ENCODE measurements at regions of chr18 and their contacts with region 1.

Region 1: GRCh38 chr18:3454365-3455089 is 4.6 kb downstream of the TGIF1 start:
- DNase-seq: peak; percentile 39
- ATAC-seq: no peak
- H3K4me3 Mint-ChIP-seq: peak overlapping the region; percentile 94
- H3K27ac Mint-ChIP-seq: peak overlapping the region; percentile 99
- H3K4me1 Mint-ChIP-seq: peaks cover 61% of the 10 kb centered on the region
- H3K27me3 Mint-ChIP-seq: no peaks in the 10 kb centered on the region
- CTCF ChIP-seq: peak; percentile 83

Region 2: DNA sequence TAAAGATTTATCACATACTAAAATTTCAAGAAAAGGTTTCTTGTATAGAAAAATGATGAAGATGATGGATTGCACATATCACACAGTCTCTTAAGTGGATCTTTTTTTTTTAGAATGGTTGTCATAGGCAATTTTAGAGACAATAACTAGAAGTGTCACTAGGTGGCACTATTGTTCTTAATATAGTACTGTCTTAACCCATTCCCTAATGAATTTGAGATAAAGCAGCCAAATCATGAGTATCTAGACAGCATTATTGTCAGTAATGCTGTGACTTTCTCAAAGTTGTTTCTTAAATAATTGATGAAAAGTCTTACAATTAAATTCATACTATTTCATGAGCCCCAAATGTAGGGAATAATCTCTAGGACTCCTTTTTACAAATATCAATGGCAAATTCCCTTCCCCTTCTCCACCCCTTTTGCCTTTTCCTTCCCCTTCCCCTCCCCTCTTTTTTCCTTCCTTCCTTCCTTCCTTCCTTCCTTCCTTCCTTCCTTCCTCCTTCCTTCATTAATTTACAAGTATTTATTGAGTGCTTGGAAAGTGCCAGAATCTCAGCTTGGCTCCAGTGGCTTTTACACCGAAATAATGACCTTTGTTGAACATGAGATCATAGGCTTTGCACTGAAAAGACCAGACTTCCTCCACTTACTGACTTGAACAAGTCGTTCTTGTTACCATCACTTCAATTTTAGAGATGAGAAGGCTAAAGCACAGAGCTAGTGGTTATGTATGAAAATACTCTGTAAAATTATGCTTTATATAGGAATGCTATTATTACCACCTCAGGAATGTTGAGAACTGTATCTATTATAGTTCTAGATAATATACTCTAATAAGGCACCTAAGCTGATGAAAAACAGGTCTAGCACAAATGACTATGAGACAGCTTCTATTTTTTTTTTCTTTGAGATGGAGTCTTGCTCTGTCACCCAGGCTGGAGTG is 172.8 kb before region 1 on chr18:
- CTCF ChIA-PET with region 1: interaction called, 24 read pairs
- POLR2A ChIA-PET with region 1: no interaction called
- intact Hi-C with region 1: loop called (anchors 5 kb)
- DNase-seq: no peak
- ATAC-seq: peak; percentile 88
- H3K4me3 Mint-ChIP-seq: no peak overlapping the region
- H3K27ac Mint-ChIP-seq: no peak overlapping the region
- H3K4me1 Mint-ChIP-seq: peaks cover 9% of the 10 kb centered on the region
- H3K27me3 Mint-ChIP-seq: no peaks in the 10 kb centered on the region
- CTCF ChIP-seq: peak; percentile 76

Region 3: GRCh38 chr18:3297025-3297984 is 157.2 kb before region 1 on chr18:
- CTCF ChIA-PET with region 1: interaction called, 42 read pairs
- POLR2A ChIA-PET with region 1: interaction called, 4 read pairs
- intact Hi-C with region 1: no loop called
- DNase-seq: peak; percentile 99
- ATAC-seq: peak; percentile 99
- H3K4me3 Mint-ChIP-seq: peak overlapping the region; percentile 92
- H3K27ac Mint-ChIP-seq: peak overlapping the region; percentile 86
- H3K4me1 Mint-ChIP-seq: peaks cover 5% of the 10 kb centered on the region
- H3K27me3 Mint-ChIP-seq: peaks cover 24% of the 10 kb centered on the region
- CTCF ChIP-seq: peak; percentile 83

Region 4: DNA sequence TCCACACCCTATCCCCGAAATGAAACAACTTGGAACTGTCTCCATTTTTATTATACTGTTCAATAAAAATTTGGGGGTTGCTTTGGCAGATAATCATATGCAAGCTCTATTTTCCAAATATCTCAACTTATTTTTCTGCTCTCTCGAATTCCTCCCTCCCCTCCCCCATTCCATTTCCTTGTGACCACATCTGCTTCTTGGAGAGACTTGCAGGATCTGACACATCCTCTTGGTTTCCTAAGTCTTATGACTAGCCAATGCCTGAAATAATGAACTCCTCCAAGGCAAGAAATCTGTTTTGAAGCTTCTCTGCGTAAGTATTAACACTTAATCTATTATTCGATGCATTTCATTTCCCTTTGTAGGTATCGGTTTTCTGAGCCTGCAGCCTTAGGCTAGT is 11.5 kb after region 1 on chr18:
- CTCF ChIA-PET with region 1: interaction called, 26 read pairs
- POLR2A ChIA-PET with region 1: interaction called, 5 read pairs
- intact Hi-C with region 1: no loop called
- DNase-seq: no peak
- ATAC-seq: no peak
- H3K4me3 Mint-ChIP-seq: no peak overlapping the region
- H3K27ac Mint-ChIP-seq: no peak overlapping the region
- H3K4me1 Mint-ChIP-seq: peaks cover 26% of the 10 kb centered on the region
- H3K27me3 Mint-ChIP-seq: no peaks in the 10 kb centered on the region
- CTCF ChIP-seq: no peak

Region 5: DNA sequence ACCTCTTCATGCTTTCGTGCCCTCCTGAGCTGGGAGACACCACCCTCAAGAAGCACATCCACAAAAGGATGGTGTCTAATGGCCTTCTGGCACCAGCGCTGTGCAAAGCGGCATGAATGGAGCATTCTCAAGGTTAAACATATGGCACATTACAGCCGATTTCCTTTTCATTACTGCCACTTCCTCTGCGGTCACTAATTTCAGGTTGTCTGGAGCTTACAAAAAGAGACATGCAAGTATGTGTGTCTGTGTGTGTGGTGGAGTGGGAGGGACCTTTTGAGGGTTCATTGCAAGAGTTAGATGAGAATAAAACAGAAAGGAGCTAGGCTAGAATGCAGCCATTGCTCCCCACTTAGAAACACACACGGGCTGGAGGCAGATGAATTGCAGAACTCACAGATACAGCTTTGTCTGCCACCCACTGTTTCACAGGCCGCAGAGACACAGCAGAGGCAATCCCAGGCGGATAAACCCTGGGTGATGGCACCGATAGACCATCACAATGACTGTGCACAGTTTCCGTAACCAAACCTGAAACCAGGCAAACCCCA is 71.4 kb after region 1 on chr18:
- CTCF ChIA-PET with region 1: interaction called, 14 read pairs
- POLR2A ChIA-PET with region 1: no interaction called
- intact Hi-C with region 1: no loop called
- DNase-seq: peak; percentile 72
- ATAC-seq: peak; percentile 84
- H3K4me3 Mint-ChIP-seq: peak overlapping the region; percentile 43
- H3K27ac Mint-ChIP-seq: peak overlapping the region; percentile 79
- H3K4me1 Mint-ChIP-seq: peaks cover 17% of the 10 kb centered on the region
- H3K27me3 Mint-ChIP-seq: no peaks in the 10 kb centered on the region
- CTCF ChIP-seq: no peak

Region 6: DNA sequence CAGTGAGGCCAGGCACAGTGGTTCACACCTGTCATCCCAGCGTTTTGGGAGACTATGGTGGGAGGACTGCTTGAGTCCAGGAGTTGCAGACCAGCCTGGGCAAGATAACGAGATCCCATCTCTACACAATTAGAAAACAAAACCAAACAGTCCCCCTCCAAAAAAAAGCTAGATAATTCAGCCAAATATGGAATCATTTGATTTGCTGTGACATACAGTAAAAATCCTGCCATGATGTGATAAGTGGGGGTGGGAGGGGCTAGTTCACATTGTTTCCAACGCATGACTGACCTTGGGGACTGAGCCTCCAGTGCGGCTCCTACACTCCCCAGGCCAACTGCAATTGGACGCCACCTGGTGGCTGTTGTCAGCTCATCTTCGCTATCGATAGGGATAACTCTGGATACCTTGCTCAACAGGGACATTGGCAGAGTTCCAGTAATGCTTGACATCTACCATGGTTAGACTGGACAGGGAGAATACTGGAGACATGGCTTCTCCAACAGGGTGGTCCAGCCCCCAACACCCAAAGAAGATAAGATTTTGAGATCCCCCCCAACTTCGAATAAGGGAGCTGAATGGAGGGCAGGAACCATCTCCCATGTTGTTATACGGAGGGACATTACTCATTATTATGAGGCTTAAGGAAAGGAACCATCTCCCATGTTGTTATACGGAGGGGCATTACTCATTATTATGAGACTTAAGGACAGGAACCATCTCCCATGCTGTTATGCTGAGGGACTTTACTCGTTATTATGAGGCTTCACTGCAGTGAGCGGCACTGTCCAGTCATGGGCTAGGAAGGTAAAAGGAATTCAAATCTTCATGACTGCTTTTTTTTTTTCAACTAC is 131.4 kb after region 1 on chr18:
- CTCF ChIA-PET with region 1: interaction called, 20 read pairs
- POLR2A ChIA-PET with region 1: interaction called, 6 read pairs
- intact Hi-C with region 1: no loop called
- DNase-seq: peak; percentile 85
- ATAC-seq: peak; percentile 85
- H3K4me3 Mint-ChIP-seq: no peak overlapping the region
- H3K27ac Mint-ChIP-seq: no peak overlapping the region
- H3K4me1 Mint-ChIP-seq: peaks cover 25% of the 10 kb centered on the region
- H3K27me3 Mint-ChIP-seq: no peaks in the 10 kb centered on the region
- CTCF ChIP-seq: peak; percentile 82

Region 7: GRCh38 chr18:3604498-3605408 is 150.2 kb after region 1 on chr18:
- CTCF ChIA-PET with region 1: interaction called, 14 read pairs
- POLR2A ChIA-PET with region 1: interaction called, 11 read pairs
- intact Hi-C with region 1: no loop called
- DNase-seq: peak; percentile 61
- ATAC-seq: peak; percentile 70
- H3K4me3 Mint-ChIP-seq: no peak overlapping the region
- H3K27ac Mint-ChIP-seq: no peak overlapping the region
- H3K4me1 Mint-ChIP-seq: peaks cover 10% of the 10 kb centered on the region
- H3K27me3 Mint-ChIP-seq: no peaks in the 10 kb centered on the region
- CTCF ChIP-seq: no peak

Measured in activated CD8-positive, alpha-beta T cell treated with anti-CD3 and anti-CD28 coated beads for 36 hours (primary cell).